HAP-1 (cell line): ENCODE measurements at regions of chr9 and their contacts with region 1.

Region 1: DNA sequence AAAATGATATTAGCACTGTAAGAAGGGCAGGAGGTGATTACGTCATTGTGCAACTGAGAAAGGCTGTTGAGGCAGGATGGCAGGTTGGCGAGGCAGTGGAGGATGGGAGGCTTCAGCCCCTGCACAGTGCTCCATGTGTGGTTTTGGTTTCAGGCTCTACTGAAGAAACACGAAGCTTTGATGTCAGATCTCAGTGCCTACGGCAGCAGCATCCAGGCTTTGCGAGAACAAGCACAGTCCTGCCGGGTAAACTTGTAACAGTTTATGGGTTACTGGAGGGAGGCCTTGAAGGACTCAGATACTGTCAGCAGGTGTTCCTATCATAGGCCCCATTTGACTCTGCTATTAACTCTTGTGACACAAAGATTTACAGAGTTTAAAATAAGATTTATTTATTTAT is 35.1 kb downstream of the SPTAN1 start:
- DNase-seq: no peak
- H3K4me3 ChIP-seq: no peak overlapping the region
- H3K4me1 ChIP-seq: no peaks in the 10 kb centered on the region
- H3K27me3 ChIP-seq: no peaks in the 10 kb centered on the region

Region 2: GRCh38 chr9:128396970-128397613 is 190.4 kb before region 1 on chr9:
- in situ Hi-C with region 1: no loop called
- DNase-seq: no peak
- H3K4me3 ChIP-seq: no peak overlapping the region
- H3K4me1 ChIP-seq: no peaks in the 10 kb centered on the region
- H3K27me3 ChIP-seq: peaks cover 6% of the 10 kb centered on the region; the same call in 1 of the 2 replicates

Region 3: DNA sequence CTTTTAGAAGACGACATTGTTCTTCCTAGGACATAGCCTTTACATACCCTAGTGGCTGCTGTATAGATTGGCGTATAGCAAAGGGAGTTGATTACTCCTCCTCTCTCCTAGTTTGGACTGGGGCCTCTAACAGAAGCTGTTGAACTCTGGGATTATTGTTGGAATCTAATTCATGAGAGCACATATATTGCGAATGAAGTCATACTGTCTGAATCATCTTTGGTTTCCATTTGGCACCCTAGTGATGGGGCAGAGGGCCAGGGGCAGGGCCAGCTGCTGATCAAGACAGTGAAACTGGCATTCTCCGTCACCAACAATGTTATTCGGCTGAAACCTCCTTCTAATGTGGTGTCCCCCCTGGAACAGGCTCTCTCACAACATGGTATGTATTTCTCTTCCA is 400.4 kb after region 1 on chr9:
- in situ Hi-C with region 1: loop called (anchors 10 kb)
- DNase-seq: no peak
- H3K4me3 ChIP-seq: no peak overlapping the region
- H3K4me1 ChIP-seq: no peaks in the 10 kb centered on the region
- H3K27me3 ChIP-seq: no peaks in the 10 kb centered on the region